HEK293 (cell line): ENCODE measurements at regions of chr1 and their contacts with region 1.

Region 1: DNA sequence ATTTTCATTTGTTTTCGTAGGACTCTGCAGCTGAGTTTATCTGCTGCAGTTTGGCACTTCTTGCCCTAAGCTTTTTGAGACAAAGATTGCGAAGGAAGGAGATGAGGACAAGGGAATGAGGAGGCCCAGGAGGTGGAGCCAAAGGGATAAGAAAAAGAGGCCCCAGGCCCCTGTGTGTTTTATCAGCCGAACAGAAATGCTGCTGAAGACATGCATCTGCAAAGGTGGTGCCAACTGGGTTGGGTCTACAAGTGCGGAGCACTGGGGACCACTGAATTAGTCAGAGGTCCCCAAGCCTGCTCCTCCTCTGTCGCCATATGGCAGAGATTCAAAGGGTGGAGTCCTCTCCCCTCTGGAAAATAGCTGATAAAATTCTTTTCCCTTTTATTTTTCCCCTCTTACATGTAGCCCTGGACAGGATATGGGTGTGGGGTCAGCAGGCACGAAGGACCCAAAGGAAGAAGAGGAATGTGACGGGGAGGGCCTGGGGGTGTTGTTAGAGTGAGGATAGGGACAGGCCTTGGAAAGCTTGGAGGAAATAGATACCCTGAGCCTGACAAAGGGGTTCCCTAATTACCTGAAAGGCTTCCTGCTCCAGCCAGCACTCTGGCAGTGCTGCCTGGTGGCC is 2.7 kb downstream of the CD34 start:
- H3K4me3 ChIP-seq: no peak overlapping the region
- H3K27ac ChIP-seq: no peak overlapping the region
- H3K4me1 ChIP-seq: no peaks in the 10 kb centered on the region
- CTCF ChIP-seq: no peak

Region 2: GRCh38 chr1:207897188-207897587 is 11.0 kb before region 1 on chr1:
- CTCF ChIA-PET with region 1: interaction called, 11 read pairs
- POLR2A ChIA-PET with region 1: interaction called, 4 read pairs
- H3K4me3 ChIP-seq: no peak overlapping the region
- H3K27ac ChIP-seq: no peak overlapping the region
- H3K4me1 ChIP-seq: no peaks in the 10 kb centered on the region
- CTCF ChIP-seq: no peak

Region 3: DNA sequence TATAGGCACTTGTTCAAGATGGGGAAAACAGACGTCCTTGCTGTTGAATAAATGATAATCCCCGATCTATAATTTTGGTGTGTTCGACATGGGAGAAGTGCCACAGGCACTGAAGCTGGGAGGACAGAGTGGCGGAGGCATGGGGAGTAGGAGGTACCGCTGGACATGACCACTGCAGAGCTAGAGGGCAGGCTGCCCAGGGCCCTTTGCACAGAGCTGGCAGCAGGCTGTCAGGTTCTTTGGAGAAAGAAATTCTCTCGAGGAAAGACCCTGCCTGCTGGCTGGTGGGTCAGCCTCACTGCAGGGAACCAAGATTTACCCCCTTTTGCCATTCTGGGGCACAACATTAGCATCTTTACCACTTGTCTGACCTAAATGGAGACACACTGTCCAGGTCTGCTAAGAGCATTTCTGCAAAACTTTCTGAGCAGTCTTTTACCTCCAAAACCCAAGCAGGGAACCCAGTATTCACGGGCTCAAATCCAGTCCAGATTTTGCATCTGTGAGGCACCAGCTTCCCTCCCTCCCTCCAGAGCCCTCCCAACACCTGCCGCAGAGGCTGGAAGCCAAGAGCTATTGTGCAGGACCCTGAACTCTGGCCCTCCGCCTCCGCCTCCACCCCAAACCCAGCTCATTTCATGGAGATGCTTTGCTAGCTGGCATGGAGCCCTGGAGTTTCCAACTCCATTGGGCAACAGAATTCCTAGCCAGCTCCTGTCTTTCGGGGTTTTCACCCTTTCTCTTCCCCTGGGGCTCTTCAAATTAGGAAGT is 193.6 kb after region 1 on chr1:
- CTCF ChIA-PET with region 1: no interaction called
- POLR2A ChIA-PET with region 1: no interaction called
- H3K4me3 ChIP-seq: no peak overlapping the region
- H3K27ac ChIP-seq: no peak overlapping the region
- H3K4me1 ChIP-seq: no peaks in the 10 kb centered on the region
- CTCF ChIP-seq: no peak